Left ventricle myocardium superior (tissue), 1 donor: ENCODE measurements at regions of chr22 and their contacts with region 1.

Region 1: GRCh38 chr22:26033071-26033470 is 136.2 kb upstream of the SEZ6L start:
- DNase-seq: no peak
- ATAC-seq: no peak

Region 2: DNA sequence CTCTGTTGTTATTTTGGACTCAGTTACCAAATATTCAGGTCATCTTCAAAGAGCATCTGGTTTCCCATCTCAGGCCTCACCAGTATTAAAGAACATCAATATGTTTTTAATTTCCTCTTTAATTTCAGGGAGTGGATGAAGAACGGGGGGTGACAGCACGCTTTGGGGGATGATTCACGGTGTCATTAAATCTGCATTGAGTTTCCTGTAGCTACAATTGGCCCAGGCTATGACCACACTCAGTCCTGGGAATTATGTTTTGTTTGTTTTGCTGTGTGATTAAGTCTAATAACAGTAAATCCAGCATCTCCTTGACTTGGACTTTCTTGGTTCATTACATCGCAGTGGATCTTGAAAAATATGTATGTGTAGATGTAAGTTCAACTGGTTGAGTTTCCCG is 13.5 kb before region 1 on chr22:
- intact Hi-C with region 1: loop called (anchors 2 kb)
- DNase-seq: no peak
- ATAC-seq: no peak